ENCODE measurements at regions of chr6 and their contacts with region 1.

Region 1: GRCh38 chr6:29752451-29753308 is 29.4 kb downstream of the HLA-F start:
- DNase-seq: peak; percentile 77 to 84 (median 81)
- H3K4me3 ChIP-seq: peak overlapping the region; percentile 95 to 97
- H3K4me3 Mint-ChIP-seq: peak overlapping the region; percentile 88 to 98 (median 96)
- H3K27ac ChIP-seq: peak overlapping the region; percentile 71
- H3K27ac Mint-ChIP-seq: peak overlapping the region; percentile 77 to 96 (median 95)
- H3K4me1 ChIP-seq: peaks cover 27% of the 10 kb centered on the region
- H3K4me1 Mint-ChIP-seq: peaks cover 30 to 57% (median 39%) of the 10 kb centered on the region in 4 donors
- H3K27me3 ChIP-seq: no peaks in the 10 kb centered on the region
- H3K27me3 Mint-ChIP-seq: peaks cover 0 to 5% of the 10 kb centered on the region in 2 donors

Region 2: GRCh38 chr6:29723262-29723665 is 29.4 kb before region 1 on chr6 and contains the start of gene HLA-F:
- CTCF ChIA-PET with region 1: interaction called, 10 read pairs
- POLR2A ChIA-PET with region 1: interaction called, 39 read pairs
- intact Hi-C with region 1: loop called (anchors 2 kb)
- DNase-seq: peak; percentile 88 to 91 (median 90)
- H3K4me3 ChIP-seq: peak within 1 kb of the TSS; percentile 95
- H3K4me3 Mint-ChIP-seq: peak within 1 kb of the TSS; percentile 94 to 98 (median 96)
- H3K27ac ChIP-seq: peak within 1 kb of the TSS; percentile 100
- H3K27ac Mint-ChIP-seq: peak within 1 kb of the TSS; percentile 96 to 99 (median 98)
- H3K4me1 ChIP-seq: peaks cover 59% of the 10 kb centered on the region
- H3K4me1 Mint-ChIP-seq: peaks cover 33 to 76% (median 43%) of the 10 kb centered on the region in 4 donors
- H3K27me3 ChIP-seq: no peaks in the 10 kb centered on the region
- H3K27me3 Mint-ChIP-seq: no peaks in the 10 kb centered on the region
- total RNA-seq, gene HLA-F: 573 to 585 TPM

Region 3: DNA sequence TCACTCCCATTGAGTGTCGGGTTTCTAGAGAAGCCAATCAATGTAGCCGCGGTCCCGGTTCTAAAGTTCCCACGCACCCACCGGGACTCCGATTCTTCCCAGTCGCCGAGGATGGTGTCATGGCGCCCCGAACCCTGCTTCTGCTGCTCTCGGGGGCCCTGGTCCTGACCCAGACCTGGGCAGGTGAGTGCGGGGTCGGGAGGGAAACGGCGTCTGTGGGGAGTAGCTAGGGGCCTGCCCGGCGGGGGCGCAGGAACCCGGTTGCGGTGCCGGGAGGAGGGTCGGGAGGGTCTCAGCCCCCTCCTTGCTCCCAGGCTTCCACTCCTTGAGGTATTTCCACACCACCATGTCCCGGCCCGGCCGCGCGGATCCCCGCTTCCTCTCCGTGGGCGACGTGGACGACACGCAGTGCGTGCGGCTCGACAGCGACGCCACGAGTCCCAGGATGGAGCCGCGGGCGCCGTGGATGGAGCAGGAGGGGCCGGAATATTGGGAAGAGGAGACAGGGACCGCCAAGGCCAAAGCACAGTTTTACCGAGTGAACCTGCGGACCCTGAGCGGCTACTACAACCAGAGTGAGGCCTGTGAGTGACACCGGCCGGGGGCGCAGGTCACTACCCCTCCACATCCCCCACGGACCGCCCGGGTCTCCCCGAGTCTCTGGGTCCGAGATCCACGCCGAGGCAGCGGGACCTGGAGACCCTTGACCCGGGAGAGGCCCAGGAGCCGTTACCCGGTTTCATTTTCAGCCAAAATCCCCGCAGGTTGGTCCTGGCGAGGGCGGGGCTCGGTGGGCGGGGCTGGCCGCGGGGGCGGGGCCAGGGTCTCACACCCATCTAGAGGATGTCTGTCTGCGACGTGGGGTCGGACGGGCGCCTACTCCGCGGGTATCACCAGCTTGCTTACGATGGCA is 39.7 kb after region 1 on chr6:
- CTCF ChIA-PET with region 1: interaction called, 3 read pairs
- POLR2A ChIA-PET with region 1: interaction called, 13 read pairs
- intact Hi-C with region 1: loop called (anchors 1 kb)
- DNase-seq: peak; percentile 66 to 87 (median 69)
- H3K4me3 ChIP-seq: peak overlapping the region; percentile 45 to 79
- H3K4me3 Mint-ChIP-seq: peak overlapping the region; percentile 88 to 94 (median 91)
- H3K27ac ChIP-seq: peak overlapping the region; percentile 74
- H3K27ac Mint-ChIP-seq: peak overlapping the region; percentile 68 to 92 (median 86)
- H3K4me1 ChIP-seq: peaks cover 15% of the 10 kb centered on the region
- H3K4me1 Mint-ChIP-seq: peaks cover 8 to 36% (median 18%) of the 10 kb centered on the region in 4 donors
- H3K27me3 ChIP-seq: no peaks in the 10 kb centered on the region
- H3K27me3 Mint-ChIP-seq: peaks cover 14 to 17% of the 10 kb centered on the region in 2 donors

Region 4: GRCh38 chr6:29813809-29814208 is 61.1 kb after region 1 on chr6:
- CTCF ChIA-PET with region 1: no interaction called
- POLR2A ChIA-PET with region 1: no interaction called
- intact Hi-C with region 1: no loop called
- DNase-seq: no peak
- H3K4me3 ChIP-seq: no peak overlapping the region
- H3K4me3 Mint-ChIP-seq: no peak overlapping the region
- H3K27ac ChIP-seq: no peak overlapping the region
- H3K27ac Mint-ChIP-seq: no peak overlapping the region
- H3K4me1 ChIP-seq: no peaks in the 10 kb centered on the region
- H3K4me1 Mint-ChIP-seq: peaks cover 0 to 6% (median 4%) of the 10 kb centered on the region in 4 donors
- H3K27me3 ChIP-seq: no peaks in the 10 kb centered on the region
- H3K27me3 Mint-ChIP-seq: peaks cover 2 to 22% of the 10 kb centered on the region in 2 donors

Region 5: GRCh38 chr6:29976588-29977424 is 224.1 kb after region 1 on chr6:
- CTCF ChIA-PET with region 1: interaction called, 3 read pairs
- POLR2A ChIA-PET with region 1: no interaction called
- intact Hi-C with region 1: loop called (anchors 10 kb)
- DNase-seq: peak; percentile 41 to 60 (median 55)
- H3K4me3 ChIP-seq: peak overlapping the region; percentile 52 to 54
- H3K4me3 Mint-ChIP-seq: peak overlapping the region; percentile 87 to 96 (median 94)
- H3K27ac ChIP-seq: no peak overlapping the region
- H3K27ac Mint-ChIP-seq: peak overlapping the region in 5 of 7 donors; percentile 29 to 88 (median 74)
- H3K4me1 ChIP-seq: peaks cover 25% of the 10 kb centered on the region
- H3K4me1 Mint-ChIP-seq: peaks cover 30 to 34% (median 31%) of the 10 kb centered on the region in 4 donors
- H3K27me3 ChIP-seq: peaks cover 17% of the 10 kb centered on the region
- H3K27me3 Mint-ChIP-seq: peaks cover 22 to 41% of the 10 kb centered on the region in 2 donors

Measured in CD4-positive, alpha-beta memory T cell (primary cell).